ENCODE measurements at regions of chr16 and their contacts with region 1.

Region 1: DNA sequence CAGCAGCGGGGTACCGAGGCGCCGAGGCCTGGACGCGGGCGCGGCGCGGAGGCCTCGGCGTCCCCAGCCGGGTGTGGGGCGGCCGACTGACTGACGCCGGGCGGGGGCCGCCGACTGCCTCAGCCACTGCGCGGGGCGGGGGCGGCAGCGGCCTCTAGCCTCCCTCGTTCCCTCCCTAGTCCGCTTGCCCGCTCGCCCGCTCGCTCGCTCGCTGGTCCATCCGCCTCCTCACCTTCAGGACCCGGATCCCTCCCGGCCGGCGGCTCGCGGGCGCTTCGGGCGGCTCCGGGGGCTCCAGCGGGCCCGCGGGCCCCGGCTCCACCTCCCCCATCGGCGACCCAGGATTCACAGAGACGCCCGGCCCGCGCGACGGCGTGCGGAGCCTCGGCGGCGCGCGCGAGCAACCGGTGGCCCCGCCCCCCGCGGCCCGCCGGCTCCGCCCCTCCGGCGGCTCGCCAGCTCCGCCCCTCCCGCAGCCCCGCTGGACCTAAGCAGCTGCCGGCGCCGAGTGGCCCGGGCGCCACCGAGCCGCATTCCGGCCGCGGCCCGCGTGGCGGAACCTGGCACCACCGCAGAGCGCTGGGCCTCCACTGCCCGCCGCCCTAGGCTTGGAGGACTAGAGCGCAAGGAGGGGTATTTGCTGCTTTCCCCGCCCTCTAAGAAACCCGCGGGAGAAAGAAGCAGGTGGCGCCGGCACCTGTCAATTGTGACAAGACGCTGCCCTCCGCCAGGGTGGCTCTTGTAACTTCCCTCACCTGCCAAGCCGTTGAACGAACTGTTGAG is 773 bp downstream of the PHLPP2 start:
- DNase-seq: peak; percentile 87
- ATAC-seq: peak; percentile 87
- H3K4me3 Mint-ChIP-seq: peak overlapping the region; percentile 95
- H3K27ac Mint-ChIP-seq: peak overlapping the region; percentile 68
- H3K4me1 Mint-ChIP-seq: peaks cover 16% of the 10 kb centered on the region
- H3K27me3 Mint-ChIP-seq: no peaks in the 10 kb centered on the region

Region 2: DNA sequence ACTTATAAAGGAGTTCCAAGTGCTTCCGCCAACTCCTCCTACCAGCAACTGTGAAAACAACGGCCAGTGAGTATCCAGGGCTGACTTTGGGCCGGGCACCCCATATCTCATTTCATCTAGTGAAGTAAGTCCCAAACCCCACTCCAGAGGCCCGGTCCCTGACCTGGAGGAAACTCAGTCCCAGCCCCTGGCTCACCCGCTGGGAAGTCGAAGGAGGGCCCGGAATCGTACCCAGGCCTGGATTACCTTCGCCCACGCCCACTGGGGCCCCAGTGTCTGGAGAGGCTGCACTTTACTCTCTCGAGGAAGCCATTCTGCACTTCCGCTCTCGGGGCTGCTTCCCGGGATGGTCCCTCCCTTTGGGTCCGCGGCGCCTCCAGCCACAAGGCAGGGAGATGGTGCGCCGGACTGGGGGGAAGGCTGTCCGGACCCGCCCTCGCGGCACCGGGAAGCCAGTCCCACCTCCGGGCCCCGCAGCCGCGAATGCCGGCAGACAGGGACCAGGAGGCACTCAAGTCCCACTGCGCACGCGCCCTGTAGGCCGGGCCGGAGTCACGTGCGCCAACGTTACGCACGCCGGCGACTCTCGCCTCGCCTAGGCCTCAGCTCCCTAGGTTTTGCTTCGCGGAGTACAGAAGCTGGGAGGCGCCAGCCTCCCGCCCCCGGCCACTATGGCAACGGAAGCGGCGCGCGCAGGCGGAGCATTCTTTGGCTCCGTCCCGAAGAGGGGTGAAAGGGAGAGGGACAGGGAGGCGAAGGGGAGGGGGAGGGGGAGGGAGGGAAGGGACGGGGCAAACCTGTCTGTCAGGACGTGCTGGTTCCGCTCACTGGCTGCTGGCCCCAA is 434.6 kb before region 1 on chr16 and contains the start of gene CMTR2:
- CTCF ChIA-PET with region 1: no interaction called
- POLR2A ChIA-PET with region 1: no interaction called
- intact Hi-C with region 1: loop called in 1 of 2 experiments (anchors 1 kb)
- DNase-seq: peak; percentile 95
- ATAC-seq: peak; percentile 97
- H3K4me3 Mint-ChIP-seq: peak within 1 kb of the TSS; percentile 83
- H3K27ac Mint-ChIP-seq: peak within 1 kb of the TSS; percentile 90
- H3K4me1 Mint-ChIP-seq: peaks cover 15% of the 10 kb centered on the region
- H3K27me3 Mint-ChIP-seq: peaks cover 16% of the 10 kb centered on the region
- total RNA-seq, gene CMTR2: 15.8 to 16.5 TPM

Region 3: GRCh38 chr16:71894921-71895678 is 171.4 kb after region 1 on chr16 and contains the start of gene IST1:
- CTCF ChIA-PET with region 1: interaction called, 3 read pairs
- POLR2A ChIA-PET with region 1: no interaction called
- intact Hi-C with region 1: loop called in 1 of 2 experiments (anchors 1 kb)
- DNase-seq: peak; percentile 99
- ATAC-seq: peak; percentile 92
- H3K4me3 Mint-ChIP-seq: peak within 1 kb of the TSS; percentile 96
- H3K27ac Mint-ChIP-seq: peak within 1 kb of the TSS; percentile 94
- H3K4me1 Mint-ChIP-seq: peaks cover 31% of the 10 kb centered on the region
- H3K27me3 Mint-ChIP-seq: no peaks in the 10 kb centered on the region
- total RNA-seq, gene IST1: 170 to 179 TPM

Region 4: GRCh38 chr16:71954699-71955195 is 231.0 kb after region 1 on chr16:
- CTCF ChIA-PET with region 1: no interaction called
- POLR2A ChIA-PET with region 1: no interaction called
- intact Hi-C with region 1: no loop called
- DNase-seq: no peak
- ATAC-seq: peak; percentile 87
- H3K4me3 Mint-ChIP-seq: no peak overlapping the region
- H3K27ac Mint-ChIP-seq: no peak overlapping the region
- H3K4me1 Mint-ChIP-seq: peaks cover 21% of the 10 kb centered on the region
- H3K27me3 Mint-ChIP-seq: no peaks in the 10 kb centered on the region